Activated B cell treated with CpG ODN at 0.5 μM for 24 hours (primary cell): ENCODE measurements at regions of chr15 and their contacts with region 1.

Region 1: DNA sequence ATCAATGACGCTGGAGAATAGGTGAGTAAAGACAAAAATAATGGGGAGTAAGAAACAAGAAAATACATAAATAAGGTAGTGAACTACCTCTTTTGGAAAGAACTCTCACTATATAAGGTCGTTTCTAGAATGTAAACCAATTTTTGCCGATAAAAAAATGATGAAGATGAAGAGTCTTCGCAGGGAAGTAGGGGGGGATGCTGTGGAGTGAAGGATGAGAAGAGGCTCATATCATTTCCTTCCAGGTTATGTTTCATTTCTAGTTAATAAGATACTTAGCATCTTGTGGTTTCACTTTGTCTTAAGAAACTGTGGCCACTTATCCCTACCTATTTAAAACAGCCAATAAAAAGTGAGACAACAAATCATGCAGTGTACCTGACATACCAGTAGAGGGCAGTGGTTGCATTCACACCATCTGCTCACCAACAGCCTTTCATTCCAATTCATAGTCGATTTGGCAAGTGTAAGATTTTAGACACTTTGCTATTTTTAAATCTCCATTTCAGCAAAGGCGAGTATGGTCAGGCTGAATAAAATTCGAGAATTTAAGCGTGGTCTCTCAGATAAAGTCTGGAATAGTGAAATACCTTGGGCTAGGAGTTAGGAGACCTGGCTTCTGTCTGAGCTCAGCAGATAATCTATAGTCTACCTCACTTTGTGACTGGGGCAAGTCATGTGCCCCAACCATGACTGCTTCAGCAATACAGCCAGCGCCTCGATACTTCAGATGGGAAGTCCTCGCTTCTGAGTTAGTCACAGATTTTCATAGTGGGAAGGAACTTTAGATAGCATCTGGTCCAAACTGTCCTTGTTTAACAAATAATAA is 28.9 kb upstream of the ICE2 start:
- DNase-seq: no peak
- ATAC-seq: peak; percentile 99
- H3K4me3 Mint-ChIP-seq: peak overlapping the region; percentile 24
- H3K27ac Mint-ChIP-seq: peak overlapping the region; percentile 2
- H3K4me1 Mint-ChIP-seq: peaks cover 11% of the 10 kb centered on the region
- H3K27me3 Mint-ChIP-seq: no peaks in the 10 kb centered on the region
- CTCF ChIP-seq: peak; percentile 55

Region 2: GRCh38 chr15:60362321-60363086 is 145.3 kb before region 1 on chr15:
- CTCF ChIA-PET with region 1: interaction called, 8 read pairs
- POLR2A ChIA-PET with region 1: no interaction called
- intact Hi-C with region 1: loop called (anchors 1 kb)
- DNase-seq: no peak
- ATAC-seq: no peak
- H3K4me3 Mint-ChIP-seq: no peak overlapping the region
- H3K27ac Mint-ChIP-seq: no peak overlapping the region
- H3K4me1 Mint-ChIP-seq: peaks cover 3% of the 10 kb centered on the region
- H3K27me3 Mint-ChIP-seq: no peaks in the 10 kb centered on the region
- CTCF ChIP-seq: no peak

Region 3: DNA sequence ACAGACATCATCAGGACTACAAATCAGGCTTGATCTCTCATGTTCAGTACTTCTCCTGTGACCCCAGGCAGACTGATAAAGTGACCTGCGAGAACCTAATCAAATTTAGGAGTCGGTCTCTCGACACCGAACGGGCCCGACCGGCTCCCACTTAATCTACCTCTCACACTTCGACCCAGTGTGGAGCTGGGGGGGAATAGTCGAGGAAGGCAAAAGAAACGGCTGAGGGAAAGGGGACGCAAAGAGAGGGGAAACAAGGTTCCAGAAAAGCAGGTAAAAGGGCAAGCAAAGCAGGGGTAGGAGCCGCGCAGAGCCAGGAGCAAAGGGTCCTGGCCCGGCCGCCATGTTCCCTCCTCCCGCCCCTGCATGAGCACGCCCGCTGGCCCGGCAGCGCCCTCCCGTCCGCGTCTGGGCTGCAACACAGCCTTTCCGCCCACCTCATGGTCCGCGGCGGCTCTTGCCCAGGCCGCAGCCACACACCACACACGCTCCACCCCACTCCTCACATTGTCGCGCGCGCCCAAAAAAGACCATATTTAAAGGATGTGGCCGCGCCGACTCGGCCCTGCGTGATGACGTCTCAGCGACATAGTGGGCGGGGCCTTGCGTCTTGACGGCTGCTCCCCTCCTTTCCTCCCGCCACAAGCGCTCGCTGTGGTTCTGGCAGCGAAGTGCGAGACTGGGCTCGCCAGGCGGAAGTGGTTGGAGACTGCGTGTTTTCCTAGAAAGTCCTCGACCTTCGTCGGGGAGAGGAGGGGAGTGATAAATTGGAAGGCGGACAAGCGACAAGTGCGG is 29.0 kb before region 1 on chr15 and contains the start of gene ICE2:
- CTCF ChIA-PET with region 1: no interaction called
- POLR2A ChIA-PET with region 1: interaction called, 3 read pairs
- intact Hi-C with region 1: loop called (anchors 1 kb)
- DNase-seq: peak; percentile 91
- ATAC-seq: peak; percentile 93
- H3K4me3 Mint-ChIP-seq: peak within 1 kb of the TSS; percentile 99
- H3K27ac Mint-ChIP-seq: peak within 1 kb of the TSS; percentile 98
- H3K4me1 Mint-ChIP-seq: peaks cover 52% of the 10 kb centered on the region
- H3K27me3 Mint-ChIP-seq: no peaks in the 10 kb centered on the region
- CTCF ChIP-seq: no peak
- total RNA-seq, gene ICE2: 55.5 and 78.0 TPM in 2 replicates

Region 4: DNA sequence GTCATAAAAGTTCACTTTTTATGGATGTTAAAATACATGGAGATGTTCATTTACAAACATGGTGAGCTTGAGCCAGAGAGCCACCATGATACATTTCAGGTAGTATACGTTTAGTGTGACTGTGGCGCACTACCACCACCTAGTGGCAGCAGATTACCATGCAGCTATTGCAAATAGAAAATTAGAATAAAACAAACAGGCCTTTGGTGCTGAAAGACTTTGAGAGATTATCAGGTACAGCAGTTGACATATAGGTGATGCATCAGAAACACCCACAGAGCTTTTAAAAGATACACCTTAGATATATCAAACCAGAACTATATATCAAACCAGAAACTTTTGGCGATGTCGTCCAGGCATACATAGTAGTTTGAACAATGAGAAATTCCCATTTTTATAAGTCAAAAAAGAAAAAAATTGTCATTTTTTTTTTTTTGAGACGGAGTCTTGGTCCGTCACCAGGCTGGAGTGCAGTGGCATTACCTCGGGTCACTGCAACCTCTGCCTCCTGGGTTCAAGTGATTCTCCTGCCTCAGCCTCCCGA is 13.1 kb after region 1 on chr15:
- CTCF ChIA-PET with region 1: interaction called, 90 read pairs
- POLR2A ChIA-PET with region 1: no interaction called
- intact Hi-C with region 1: loop called (anchors 1 kb)
- DNase-seq: peak; percentile 51
- ATAC-seq: peak; percentile 95
- H3K4me3 Mint-ChIP-seq: peak overlapping the region; percentile 17
- H3K27ac Mint-ChIP-seq: no peak overlapping the region
- H3K4me1 Mint-ChIP-seq: peaks cover 12% of the 10 kb centered on the region
- H3K27me3 Mint-ChIP-seq: no peaks in the 10 kb centered on the region
- CTCF ChIP-seq: peak; percentile 100

Region 5: GRCh38 chr15:60859996-60860494 is 352.2 kb after region 1 on chr15:
- CTCF ChIA-PET with region 1: no interaction called
- POLR2A ChIA-PET with region 1: no interaction called
- intact Hi-C with region 1: no loop called
- DNase-seq: no peak
- ATAC-seq: no peak
- H3K4me3 Mint-ChIP-seq: no peak overlapping the region
- H3K27ac Mint-ChIP-seq: no peak overlapping the region
- H3K4me1 Mint-ChIP-seq: no peaks in the 10 kb centered on the region
- H3K27me3 Mint-ChIP-seq: no peaks in the 10 kb centered on the region
- CTCF ChIP-seq: no peak

Region 6: GRCh38 chr15:60916679-60917460 is 409.1 kb after region 1 on chr15:
- CTCF ChIA-PET with region 1: interaction called, 13 read pairs
- POLR2A ChIA-PET with region 1: no interaction called
- intact Hi-C with region 1: loop called (anchors 1 kb)
- DNase-seq: peak; percentile 47
- ATAC-seq: peak; percentile 97
- H3K4me3 Mint-ChIP-seq: peak overlapping the region; percentile 58
- H3K27ac Mint-ChIP-seq: peak overlapping the region; percentile 39
- H3K4me1 Mint-ChIP-seq: peaks cover 15% of the 10 kb centered on the region
- H3K27me3 Mint-ChIP-seq: no peaks in the 10 kb centered on the region
- CTCF ChIP-seq: peak; percentile 42

Region 7: GRCh38 chr15:61621146-61621545 is 1113.3 kb after region 1 on chr15:
- CTCF ChIA-PET with region 1: no interaction called
- POLR2A ChIA-PET with region 1: no interaction called
- intact Hi-C with region 1: loop called (anchors 5 kb)
- DNase-seq: no peak
- ATAC-seq: no peak
- H3K4me3 Mint-ChIP-seq: no peak overlapping the region
- H3K27ac Mint-ChIP-seq: no peak overlapping the region
- H3K4me1 Mint-ChIP-seq: no peaks in the 10 kb centered on the region
- H3K27me3 Mint-ChIP-seq: no peaks in the 10 kb centered on the region
- CTCF ChIP-seq: no peak

Region 8: DNA sequence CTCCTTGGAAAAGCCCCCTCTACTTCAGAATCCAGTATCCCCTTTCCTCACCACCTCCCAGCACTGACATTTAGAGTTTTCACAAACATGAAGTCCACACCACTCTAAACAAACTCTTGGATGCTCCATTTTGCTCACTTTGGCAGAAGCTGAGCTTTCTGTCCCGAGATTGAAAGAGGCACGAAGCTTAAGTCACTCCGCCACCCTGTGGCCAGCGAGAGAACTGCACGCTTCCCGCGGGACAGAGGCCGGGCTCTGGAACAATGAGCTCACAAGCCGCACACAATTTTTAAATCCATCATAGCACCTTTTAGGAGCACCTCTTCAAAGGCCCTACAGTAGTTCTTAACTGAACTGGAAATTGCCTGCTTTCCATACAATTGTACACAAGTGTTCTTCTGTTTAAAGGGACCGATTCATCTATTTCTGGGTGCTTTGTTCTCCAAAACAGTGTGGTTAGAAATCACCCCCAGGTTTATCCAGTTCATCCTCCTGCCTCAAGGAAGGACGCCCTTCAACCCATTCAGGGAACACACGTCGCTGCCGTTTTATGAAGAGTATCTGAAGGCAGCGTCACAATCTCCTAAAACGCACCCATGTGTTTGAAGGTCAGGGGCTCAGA is 1326.4 kb after region 1 on chr15:
- CTCF ChIA-PET with region 1: interaction called, 4 read pairs
- POLR2A ChIA-PET with region 1: no interaction called
- intact Hi-C with region 1: loop called (anchors 1 kb)
- DNase-seq: peak; percentile 66
- ATAC-seq: peak; percentile 77
- H3K4me3 Mint-ChIP-seq: no peak overlapping the region
- H3K27ac Mint-ChIP-seq: no peak overlapping the region
- H3K4me1 Mint-ChIP-seq: peaks cover 3% of the 10 kb centered on the region
- H3K27me3 Mint-ChIP-seq: peaks cover 24% of the 10 kb centered on the region
- CTCF ChIP-seq: no peak